Heart left ventricle (tissue), 16 donors: ENCODE measurements at regions of chr11 and their contacts with region 1.

Region 1: DNA sequence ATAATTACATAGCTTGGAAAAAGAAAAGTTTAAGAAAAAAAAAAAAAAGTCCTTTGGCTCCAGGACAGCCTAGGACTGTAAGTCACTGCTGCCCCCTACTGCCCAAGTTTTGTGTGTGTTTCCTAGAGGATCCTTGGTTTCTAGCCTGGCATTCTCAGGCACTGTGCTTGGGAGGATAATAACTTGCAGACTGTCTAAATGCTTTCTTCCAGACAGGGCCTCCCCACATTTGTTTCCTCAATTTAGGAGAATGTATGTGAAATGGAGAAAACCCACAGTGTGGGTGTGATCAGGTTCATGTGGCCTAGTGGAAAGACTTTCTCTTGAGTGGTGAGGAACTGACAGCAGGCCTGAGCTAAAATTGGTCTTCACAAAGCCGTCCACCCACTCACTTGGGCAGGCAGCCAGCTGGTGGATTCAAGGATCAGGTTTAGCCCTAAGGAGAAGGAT is 191.0 kb downstream of the NAV2 start:
- DNase-seq: peak in 4 of 5 donors; percentile 46 to 75 (median 68)
- ATAC-seq: peak; percentile 44 to 73 (median 63)
- H3K4me3 ChIP-seq: no peak overlapping the region
- H3K27ac ChIP-seq: peak overlapping the region in 1 of 12 donors; percentile 10
- H3K4me1 ChIP-seq: peaks cover 0 to 26% (median 5%) of the 10 kb centered on the region in 12 donors
- H3K27me3 ChIP-seq: no peaks in the 10 kb centered on the region
- CTCF ChIP-seq: peak; percentile 68 to 85 (median 76)
- POLR2A ChIP-seq: no peak

Region 2: GRCh38 chr11:19814421-19814820 is 89.2 kb before region 1 on chr11:
- intact Hi-C with region 1: loop called in 3 of 10 experiments (anchors 5 kb)
- DNase-seq: no peak
- ATAC-seq: no peak
- H3K4me3 ChIP-seq: no peak overlapping the region
- H3K27ac ChIP-seq: peak overlapping the region in 1 of 12 donors; percentile 75
- H3K4me1 ChIP-seq: peaks cover 0 to 76% (median 40%) of the 10 kb centered on the region in 12 donors
- H3K27me3 ChIP-seq: no peaks in the 10 kb centered on the region
- CTCF ChIP-seq: no peak
- POLR2A ChIP-seq: no peak

Region 3: GRCh38 chr11:19846654-19847305 is 56.9 kb before region 1 on chr11:
- intact Hi-C with region 1: no loop called
- DNase-seq: peak in 4 of 5 donors; percentile 35 to 69 (median 50)
- ATAC-seq: peak; percentile 86 to 94 (median 90)
- H3K4me3 ChIP-seq: no peak overlapping the region
- H3K27ac ChIP-seq: peak overlapping the region in 6 of 12 donors; percentile 14 to 77 (median 46)
- H3K4me1 ChIP-seq: peaks cover 0 to 69% (median 20%) of the 10 kb centered on the region in 12 donors
- H3K27me3 ChIP-seq: no peaks in the 10 kb centered on the region
- CTCF ChIP-seq: no peak
- POLR2A ChIP-seq: no peak